ENCODE measurements at regions of chr15 and their contacts with region 1.

Region 1: GRCh38 chr15:101307048-101307896 is 12.2 kb upstream of the SNRPA1 start:
- DNase-seq: peak; percentile 57
- ATAC-seq: peak; percentile 8
- H3K4me3 ChIP-seq: no peak overlapping the region
- H3K27ac ChIP-seq: no peak overlapping the region
- H3K4me1 ChIP-seq: no peaks in the 10 kb centered on the region
- H3K27me3 ChIP-seq: no peaks in the 10 kb centered on the region
- CTCF ChIP-seq: no peak

Region 2: GRCh38 chr15:101641166-101641764 is 334.0 kb after region 1 on chr15:
- intact Hi-C with region 1: loop called (anchors 10 kb)
- DNase-seq: no peak
- ATAC-seq: peak; percentile 89
- H3K4me3 ChIP-seq: no peak overlapping the region
- H3K27ac ChIP-seq: peak overlapping the region; percentile 30
- H3K4me1 ChIP-seq: peaks cover 8% of the 10 kb centered on the region
- H3K27me3 ChIP-seq: no peaks in the 10 kb centered on the region
- CTCF ChIP-seq: peak; percentile 97